ENCODE measurements at regions of chr11 and their contacts with region 1.

Region 1: GRCh38 chr11:83156150-83156995 is 558 bp upstream of the PCF11 start:
- DNase-seq: peak; percentile 99
- ATAC-seq: peak; percentile 97

Region 2: DNA sequence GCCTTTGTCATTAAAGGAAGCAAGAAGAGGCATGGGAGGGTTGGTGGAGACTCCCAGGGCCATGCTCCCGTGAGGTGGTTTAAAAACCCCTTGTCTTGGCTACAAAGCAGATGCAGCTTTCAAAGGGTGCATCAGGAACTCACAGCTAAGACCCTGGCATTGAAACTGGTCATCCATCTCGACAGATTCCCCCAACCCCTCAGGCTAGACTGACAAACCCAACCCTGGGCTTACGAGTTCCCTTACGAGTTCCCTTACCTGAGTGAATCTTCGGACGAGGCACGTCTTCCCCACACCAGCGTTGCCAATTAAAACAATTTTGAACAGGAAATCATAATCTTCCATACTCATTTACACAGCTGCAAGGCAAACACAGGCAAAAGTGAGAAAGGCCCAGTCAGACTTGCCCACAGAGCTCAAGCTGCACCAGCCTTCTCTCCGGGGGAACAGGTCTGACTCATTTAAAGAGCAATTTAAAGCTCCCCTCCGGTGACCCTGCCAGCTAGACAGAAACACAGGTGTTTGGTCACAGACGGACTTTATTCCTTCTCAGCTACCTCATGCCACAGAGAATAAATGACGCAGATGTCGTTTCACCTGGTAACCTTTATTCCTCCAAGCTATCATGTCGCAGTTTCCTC is 159.3 kb before region 1 on chr11:
- intact Hi-C with region 1: loop called (anchors 5 kb)
- DNase-seq: no peak
- ATAC-seq: no peak

Region 3: GRCh38 chr11:83193315-83194280 is 37.2 kb after region 1 on chr11 and contains the start of gene ANKRD42:
- intact Hi-C with region 1: loop called (anchors 2 kb)
- DNase-seq: peak; percentile 95
- ATAC-seq: peak; percentile 96
- total RNA-seq, gene ANKRD42: 4.7 TPM

Region 4: DNA sequence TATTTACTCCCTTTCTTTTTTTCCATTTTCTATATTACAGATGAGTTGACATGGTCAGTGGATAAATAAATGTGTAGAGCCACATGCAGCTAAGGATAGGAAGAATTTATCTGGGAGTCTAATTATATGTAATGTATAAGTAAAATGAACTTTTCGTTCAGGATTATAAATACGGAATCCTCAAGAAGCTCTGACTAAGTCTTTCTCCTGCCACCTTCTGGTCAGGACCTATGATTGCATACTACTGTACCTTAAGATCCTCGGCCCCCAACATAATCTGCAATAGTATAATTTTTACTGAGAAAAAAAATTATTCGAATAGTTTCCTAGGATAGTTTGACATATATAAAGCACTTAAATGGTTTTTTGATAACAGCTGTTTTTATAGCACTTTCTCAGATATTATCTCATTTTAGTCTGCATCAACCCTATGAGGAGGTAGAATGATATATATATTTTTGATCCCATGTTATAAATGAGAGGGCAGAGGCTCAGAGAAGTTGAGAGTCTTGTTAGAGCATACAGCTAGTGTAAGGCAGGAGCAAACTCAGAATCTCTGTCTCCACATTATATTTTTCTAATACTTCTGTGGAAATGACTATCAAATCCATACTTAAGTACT is 93.7 kb after region 1 on chr11:
- intact Hi-C with region 1: no loop called
- DNase-seq: no peak
- ATAC-seq: peak; percentile 54